Activated CD8-positive, alpha-beta memory T cell treated with anti-CD3 and anti-CD28 coated beads, Interleukin-2, amount 10 ng/mL, durations not matched to agents 7 days and 5 days (primary cell): ENCODE measurements at regions of chr12 and their contacts with region 1.

Region 1: GRCh38 chr12:3885277-3886094 is 12.3 kb upstream of the PARP11 start:
- DNase-seq: peak; percentile 50
- ATAC-seq: peak; percentile 45
- H3K4me3 Mint-ChIP-seq: peak overlapping the region; percentile 0
- H3K27ac Mint-ChIP-seq: no peak overlapping the region
- H3K4me1 Mint-ChIP-seq: peaks cover 9% of the 10 kb centered on the region
- H3K27me3 Mint-ChIP-seq: peaks cover 4% of the 10 kb centered on the region

Region 2: GRCh38 chr12:3820122-3820521 is 65.4 kb before region 1 on chr12:
- CTCF ChIA-PET with region 1: no interaction called
- DNase-seq: no peak
- ATAC-seq: no peak
- H3K4me3 Mint-ChIP-seq: no peak overlapping the region
- H3K27ac Mint-ChIP-seq: no peak overlapping the region
- H3K4me1 Mint-ChIP-seq: no peaks in the 10 kb centered on the region
- H3K27me3 Mint-ChIP-seq: no peaks in the 10 kb centered on the region

Region 3: DNA sequence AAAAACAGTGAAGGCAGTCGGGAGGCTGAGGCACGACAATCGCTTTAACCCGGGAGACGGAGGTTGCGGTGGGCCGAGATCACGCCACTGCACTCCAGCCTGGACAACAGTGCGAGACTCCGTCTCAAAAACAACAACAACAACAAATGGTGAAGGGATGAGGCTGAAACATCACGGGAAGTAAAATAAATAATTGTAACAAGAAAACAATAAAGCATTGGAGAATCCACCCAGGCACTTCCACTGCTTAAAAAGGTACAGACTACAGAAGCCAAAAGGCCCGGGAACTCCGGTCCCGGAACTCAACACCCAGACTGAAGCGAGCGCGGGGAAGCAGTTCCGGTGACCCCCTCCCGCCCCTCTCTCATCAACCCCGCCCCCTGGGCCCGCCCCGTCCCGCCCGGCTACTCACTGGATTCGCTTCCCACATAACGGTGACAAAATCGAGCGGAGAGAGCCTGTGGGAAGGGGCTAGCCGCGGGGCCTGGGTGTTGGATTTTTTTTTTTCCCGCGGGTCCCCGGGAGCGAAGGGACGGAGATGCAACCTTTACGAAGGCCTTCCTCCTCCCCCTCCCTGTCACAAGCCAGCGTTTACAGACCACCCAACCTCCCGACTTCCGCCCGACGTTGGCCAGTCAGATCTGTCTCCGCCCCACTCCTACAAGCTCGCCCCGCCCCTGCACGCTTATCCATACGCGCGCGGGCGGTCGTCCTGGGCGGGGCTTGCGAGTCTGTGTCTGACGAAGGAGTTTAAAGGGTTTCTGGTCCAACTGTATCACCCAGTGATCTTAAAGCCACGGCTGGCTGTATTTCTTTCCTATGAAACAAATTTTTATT is 12.5 kb before region 1 on chr12 and contains the start of gene PARP11:
- CTCF ChIA-PET with region 1: interaction called, 41 read pairs
- DNase-seq: peak; percentile 99
- ATAC-seq: peak; percentile 95
- H3K4me3 Mint-ChIP-seq: peak within 1 kb of the TSS; percentile 97
- H3K27ac Mint-ChIP-seq: peak within 1 kb of the TSS; percentile 96
- H3K4me1 Mint-ChIP-seq: peaks cover 39% of the 10 kb centered on the region
- H3K27me3 Mint-ChIP-seq: peaks cover 4% of the 10 kb centered on the region
- total RNA-seq, gene PARP11: 15.9 to 29.7 TPM

Region 4: DNA sequence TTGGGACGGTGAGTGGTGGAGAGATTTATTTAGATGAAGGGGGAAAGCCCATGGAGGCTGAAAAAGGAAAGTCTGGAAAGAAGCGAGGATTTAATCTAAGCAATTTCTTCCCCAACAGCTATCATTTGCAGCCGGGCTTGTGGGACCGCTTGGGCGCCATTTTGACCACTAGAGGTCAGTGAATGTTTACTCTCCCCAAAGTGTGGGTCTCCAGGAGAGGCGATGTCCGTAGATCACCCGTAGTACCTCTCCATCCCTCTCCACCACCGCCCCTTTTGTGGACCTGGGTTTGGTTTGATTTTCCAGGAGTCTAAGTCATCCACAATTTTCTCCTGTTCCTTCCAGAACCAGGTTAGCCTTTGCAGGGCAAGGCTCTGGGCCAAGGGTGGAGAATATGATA is 79.0 kb after region 1 on chr12:
- CTCF ChIA-PET with region 1: interaction called, 59 read pairs
- DNase-seq: no peak
- ATAC-seq: no peak
- H3K4me3 Mint-ChIP-seq: no peak overlapping the region
- H3K27ac Mint-ChIP-seq: no peak overlapping the region
- H3K4me1 Mint-ChIP-seq: peaks cover 19% of the 10 kb centered on the region
- H3K27me3 Mint-ChIP-seq: peaks cover 2% of the 10 kb centered on the region

Region 5: DNA sequence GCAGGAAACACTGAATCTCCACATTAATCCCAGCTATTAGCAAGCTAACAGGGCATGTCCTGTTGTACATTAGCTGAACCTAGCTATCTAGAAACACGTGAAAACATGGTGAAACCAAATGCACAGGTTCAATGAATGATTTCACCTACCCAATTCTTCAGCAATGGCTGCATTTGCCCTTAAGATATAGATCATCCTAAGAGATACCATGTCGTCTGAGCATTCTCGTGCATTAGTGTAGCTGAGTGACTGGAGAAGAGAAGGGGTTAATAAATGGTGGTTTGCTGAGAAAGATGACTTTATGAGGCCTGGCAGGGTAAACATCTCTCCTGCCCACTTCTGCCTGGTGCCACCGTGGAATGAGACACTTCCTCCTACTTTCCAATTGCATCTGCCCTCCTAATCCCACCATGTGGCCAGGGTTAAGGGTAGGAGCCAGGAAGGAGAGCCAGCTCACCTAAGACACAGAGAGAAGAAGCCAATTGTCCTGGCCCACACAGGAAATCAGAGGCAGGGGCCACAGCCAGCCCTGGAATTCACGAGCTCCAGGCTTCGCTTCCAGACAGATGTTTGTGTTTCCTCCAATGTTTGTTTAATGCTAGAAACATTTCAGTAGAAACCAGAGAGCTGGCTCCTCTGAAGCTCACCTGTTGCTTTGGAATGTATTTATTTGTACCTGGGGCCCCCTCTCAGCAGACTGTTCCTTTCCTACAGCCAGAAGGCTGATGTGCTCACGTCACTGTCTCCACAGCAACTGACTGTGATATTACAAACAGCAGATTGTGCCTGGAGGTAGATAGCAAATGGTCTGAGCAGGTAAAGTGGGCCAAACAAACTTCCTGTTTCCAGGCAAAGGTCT is 113.7 kb after region 1 on chr12:
- CTCF ChIA-PET with region 1: interaction called, 33 read pairs
- DNase-seq: no peak
- ATAC-seq: no peak
- H3K4me3 Mint-ChIP-seq: no peak overlapping the region
- H3K27ac Mint-ChIP-seq: no peak overlapping the region
- H3K4me1 Mint-ChIP-seq: peaks cover 18% of the 10 kb centered on the region
- H3K27me3 Mint-ChIP-seq: peaks cover 3% of the 10 kb centered on the region

Region 6: GRCh38 chr12:4107436-4107878 is 222.0 kb after region 1 on chr12:
- CTCF ChIA-PET with region 1: interaction called, 11 read pairs
- DNase-seq: peak; percentile 90
- ATAC-seq: peak; percentile 91
- H3K4me3 Mint-ChIP-seq: peak overlapping the region; percentile 68
- H3K27ac Mint-ChIP-seq: peak overlapping the region; percentile 95
- H3K4me1 Mint-ChIP-seq: peaks cover 64% of the 10 kb centered on the region
- H3K27me3 Mint-ChIP-seq: peaks cover 6% of the 10 kb centered on the region